Keratinocyte (primary cell): ENCODE measurements at regions of chr2 and their contacts with region 1.

Region 1: DNA sequence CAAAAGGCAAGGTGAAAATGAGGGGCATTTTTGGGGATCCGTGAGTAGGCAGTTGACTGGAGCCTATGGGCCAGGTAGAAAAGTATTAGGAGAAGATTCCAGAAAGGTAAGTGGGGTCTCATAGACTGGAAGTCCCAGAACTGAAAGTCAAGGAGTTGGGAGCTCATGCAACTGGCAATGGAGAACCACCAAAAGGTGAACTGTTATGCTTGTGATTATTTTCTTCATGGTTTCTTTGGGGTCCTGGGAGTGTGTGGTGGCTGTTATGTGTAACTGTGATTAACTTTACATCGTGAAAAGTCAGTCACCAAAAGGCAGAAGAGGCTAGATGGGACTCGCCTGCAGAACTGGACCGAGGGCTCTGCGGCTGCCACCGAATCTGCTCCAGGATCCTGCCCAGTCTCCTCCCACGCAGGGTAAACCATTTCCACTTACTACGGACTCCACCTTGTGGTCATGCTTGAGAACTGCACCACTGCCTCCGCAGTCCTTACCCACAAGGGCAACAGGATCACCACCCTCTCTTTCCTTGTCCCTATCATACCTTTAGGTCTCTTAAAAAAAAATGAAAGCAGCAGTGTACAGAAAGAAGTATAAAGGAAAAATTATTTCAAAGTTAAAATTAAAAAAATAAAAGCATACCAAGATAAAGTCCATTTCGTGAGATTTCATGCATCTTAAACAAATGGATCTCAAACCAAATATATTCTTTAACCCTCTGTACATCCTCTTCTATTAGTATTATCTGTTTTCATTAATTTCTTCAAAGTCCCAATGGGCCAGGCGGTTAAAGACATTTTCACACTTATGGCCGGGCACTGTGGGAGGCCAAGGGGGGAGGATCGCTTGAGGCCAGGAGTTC is 15.6 kb upstream of the CEP68 start:
- DNase-seq: no peak
- H3K4me3 ChIP-seq: peak overlapping the region in 1 of 3 experiments; percentile 44
- H3K27ac ChIP-seq: no peak overlapping the region
- H3K4me1 ChIP-seq: peaks cover 11% of the 10 kb centered on the region
- H3K27me3 ChIP-seq: no peaks in the 10 kb centered on the region
- CTCF ChIP-seq: peak; percentile 92 to 99 (median 98)

Region 2: GRCh38 chr2:64914735-64915509 is 125.7 kb before region 1 on chr2:
- dilution Hi-C with region 1: loop called (anchors 25 kb)
- DNase-seq: no peak
- H3K4me3 ChIP-seq: no peak overlapping the region
- H3K27ac ChIP-seq: no peak overlapping the region
- H3K4me1 ChIP-seq: no peaks in the 10 kb centered on the region
- H3K27me3 ChIP-seq: no peaks in the 10 kb centered on the region
- CTCF ChIP-seq: no peak